ENCODE measurements at regions of chr6 and their contacts with region 1.

Region 1: GRCh38 chr6:26537846-26538571 is at the start of gene HMGN4:
- DNase-seq: peak; percentile 82
- H3K4me3 Mint-ChIP-seq: peak within 1 kb of the TSS; percentile 90
- H3K27ac Mint-ChIP-seq: peak within 1 kb of the TSS; percentile 96
- H3K4me1 Mint-ChIP-seq: peaks cover 41% of the 10 kb centered on the region
- H3K27me3 Mint-ChIP-seq: no peaks in the 10 kb centered on the region
- total RNA-seq, gene HMGN4: 92.2 and 99.4 TPM in 2 replicates

Region 2: DNA sequence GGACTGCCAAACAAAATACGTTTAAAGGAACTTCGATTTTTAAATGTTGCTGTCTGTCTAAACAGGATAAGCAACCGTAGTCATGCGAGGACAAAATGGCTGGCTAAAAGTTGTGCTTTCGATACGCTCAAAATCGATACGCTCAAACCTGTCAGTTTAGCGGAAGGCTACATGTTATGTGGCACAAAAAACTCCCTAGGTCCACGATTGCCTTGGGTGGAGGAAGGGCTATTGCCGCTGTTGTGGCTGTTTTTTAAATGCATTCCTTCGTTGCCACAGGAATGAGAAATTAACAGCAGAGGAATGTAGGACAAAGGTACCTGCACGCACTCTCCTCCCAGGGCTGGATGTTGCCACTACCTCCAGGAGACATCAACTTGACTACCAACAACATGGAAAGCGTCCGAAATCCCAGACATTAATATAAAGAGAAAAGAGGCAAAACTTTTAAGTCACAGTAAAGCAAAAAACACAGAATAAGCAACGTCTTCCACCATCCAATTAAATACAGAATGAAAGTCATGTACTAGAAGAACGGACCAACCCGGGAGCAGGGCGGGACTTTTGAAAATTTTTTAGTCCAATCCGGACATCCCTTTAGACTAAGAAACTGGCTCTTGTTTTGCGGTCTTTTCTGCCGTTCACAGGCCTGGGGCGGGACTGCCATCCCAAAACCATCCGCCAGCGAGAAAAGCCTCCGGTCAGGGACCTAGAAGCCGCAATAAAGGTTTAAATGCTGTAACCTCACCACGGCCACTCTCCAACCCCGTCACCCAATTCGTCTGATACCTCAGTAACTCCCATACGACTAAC is 482.9 kb before region 1 on chr6:
- intact Hi-C with region 1: no loop called
- DNase-seq: peak; percentile 85
- H3K4me3 Mint-ChIP-seq: peak overlapping the region; percentile 90
- H3K27ac Mint-ChIP-seq: peak overlapping the region; percentile 99
- H3K4me1 Mint-ChIP-seq: peaks cover 33% of the 10 kb centered on the region
- H3K27me3 Mint-ChIP-seq: no peaks in the 10 kb centered on the region

Region 3: DNA sequence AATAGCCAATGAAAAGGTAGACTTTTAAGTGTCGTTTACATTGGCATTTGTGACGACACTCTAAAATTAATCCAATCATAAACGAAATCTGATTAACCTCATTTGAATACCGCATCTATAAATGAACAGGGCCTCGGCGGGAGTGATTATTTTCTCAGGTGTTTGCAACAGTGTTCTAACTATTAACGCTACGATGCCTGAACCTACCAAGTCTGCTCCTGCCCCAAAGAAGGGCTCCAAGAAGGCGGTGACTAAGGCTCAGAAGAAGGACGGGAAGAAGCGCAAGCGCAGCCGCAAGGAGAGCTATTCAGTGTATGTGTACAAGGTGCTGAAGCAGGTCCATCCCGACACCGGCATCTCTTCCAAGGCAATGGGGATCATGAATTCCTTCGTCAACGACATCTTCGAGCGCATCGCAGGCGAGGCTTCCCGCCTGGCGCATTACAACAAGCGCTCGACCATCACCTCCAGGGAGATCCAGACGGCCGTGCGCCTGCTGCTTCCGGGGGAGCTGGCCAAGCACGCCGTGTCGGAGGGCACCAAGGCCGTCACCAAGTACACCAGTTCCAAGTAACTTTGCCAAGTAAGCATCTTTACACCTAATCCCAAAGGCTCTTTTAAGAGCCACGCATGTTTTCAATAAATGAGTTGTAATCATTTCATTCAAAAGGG is 379.9 kb before region 1 on chr6:
- intact Hi-C with region 1: no loop called
- DNase-seq: peak; percentile 90
- H3K4me3 Mint-ChIP-seq: peak overlapping the region; percentile 90
- H3K27ac Mint-ChIP-seq: peak overlapping the region; percentile 96
- H3K4me1 Mint-ChIP-seq: peaks cover 47% of the 10 kb centered on the region
- H3K27me3 Mint-ChIP-seq: no peaks in the 10 kb centered on the region

Region 4: GRCh38 chr6:26322645-26323482 is 215.1 kb before region 1 on chr6:
- intact Hi-C with region 1: loop called (anchors 2 kb)
- DNase-seq: peak; percentile 60
- H3K4me3 Mint-ChIP-seq: peak overlapping the region; percentile 86
- H3K27ac Mint-ChIP-seq: peak overlapping the region; percentile 91
- H3K4me1 Mint-ChIP-seq: peaks cover 45% of the 10 kb centered on the region
- H3K27me3 Mint-ChIP-seq: peaks cover 3% of the 10 kb centered on the region

Region 5: DNA sequence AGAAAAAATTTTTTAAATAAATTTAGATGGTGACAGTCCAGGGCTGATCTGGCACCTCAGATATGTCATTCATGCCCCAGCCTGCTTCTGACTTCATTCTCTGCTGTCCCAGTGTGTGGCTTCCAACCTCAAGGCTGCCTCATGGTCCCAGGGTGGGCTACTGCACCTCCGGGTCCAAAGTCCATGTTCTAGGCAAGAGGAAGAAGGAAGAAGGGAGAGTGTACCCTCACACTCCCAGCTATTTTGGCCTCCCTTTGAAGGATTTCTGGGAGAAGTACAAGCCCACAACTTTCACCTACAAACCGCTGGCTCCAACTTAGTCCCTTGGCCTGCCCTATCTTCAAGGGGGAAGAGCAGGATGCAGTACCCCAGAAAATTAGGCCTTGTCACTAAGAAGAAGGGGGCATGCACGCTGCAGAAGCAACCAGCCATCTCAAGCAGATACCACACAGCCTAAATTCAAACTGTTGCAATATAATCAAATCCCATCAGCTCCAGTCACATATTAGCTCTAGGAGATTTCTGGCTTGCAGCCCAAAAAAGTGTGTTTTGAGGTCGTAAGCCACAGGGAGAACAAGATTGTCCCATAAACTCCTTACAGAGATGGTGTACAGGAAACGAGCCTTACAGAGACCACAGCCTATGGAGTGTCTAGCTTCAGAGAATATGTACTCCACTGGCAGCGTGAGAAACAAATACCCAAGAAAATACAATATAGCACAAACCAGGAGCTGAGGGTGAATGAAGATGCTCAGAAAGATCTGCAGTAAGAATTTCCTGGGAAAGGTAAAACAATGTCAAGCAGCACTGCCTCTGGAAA is 173.9 kb before region 1 on chr6:
- intact Hi-C with region 1: no loop called
- DNase-seq: no peak
- H3K4me3 Mint-ChIP-seq: no peak overlapping the region
- H3K27ac Mint-ChIP-seq: no peak overlapping the region
- H3K4me1 Mint-ChIP-seq: peaks cover 52% of the 10 kb centered on the region
- H3K27me3 Mint-ChIP-seq: no peaks in the 10 kb centered on the region

Region 6: GRCh38 chr6:26473758-26474438 is 64.1 kb before region 1 on chr6:
- intact Hi-C with region 1: loop called (anchors 2 kb)
- DNase-seq: peak; percentile 79
- H3K4me3 Mint-ChIP-seq: peak overlapping the region; percentile 100
- H3K27ac Mint-ChIP-seq: peak overlapping the region; percentile 100
- H3K4me1 Mint-ChIP-seq: peaks cover 29% of the 10 kb centered on the region
- H3K27me3 Mint-ChIP-seq: no peaks in the 10 kb centered on the region

Region 7: DNA sequence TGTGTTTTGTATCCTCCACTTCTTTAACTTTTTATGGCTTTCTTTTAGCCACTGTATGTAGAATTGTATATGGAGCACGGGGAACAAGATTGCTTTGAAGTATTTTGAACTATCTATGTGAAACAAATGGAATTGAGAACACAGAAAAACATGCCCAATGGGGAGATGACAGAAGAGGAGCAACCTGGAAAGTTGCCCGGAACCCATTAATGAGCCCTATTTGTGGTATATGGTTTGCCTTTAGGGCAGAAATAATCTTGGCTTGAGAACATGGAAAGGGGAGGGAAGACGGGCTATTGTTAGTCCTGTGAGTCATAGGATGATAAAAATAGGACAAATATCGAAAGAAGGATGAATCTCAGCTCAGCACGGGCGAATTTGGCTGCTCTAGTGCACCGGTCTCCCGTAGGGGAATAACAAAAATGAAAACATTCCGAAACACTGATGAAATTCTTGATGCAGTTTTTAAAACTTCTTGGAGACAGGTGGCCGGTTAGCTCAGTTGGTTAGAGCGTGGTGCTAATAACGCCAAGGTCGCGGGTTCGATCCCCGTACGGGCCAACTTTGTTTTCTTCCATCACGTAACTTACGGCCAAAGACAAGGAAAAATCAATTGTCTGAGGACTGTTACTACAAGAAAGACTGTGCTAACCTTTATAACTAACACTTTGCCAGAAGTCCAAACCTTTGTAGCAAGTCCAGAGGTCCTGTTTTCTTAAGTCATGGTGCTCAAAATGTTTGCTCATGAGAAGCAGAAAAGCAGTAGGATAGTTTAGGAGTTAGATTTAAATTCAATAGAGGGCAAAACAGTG is 15.8 kb after region 1 on chr6:
- intact Hi-C with region 1: loop called (anchors 1 kb)
- DNase-seq: peak; percentile 78
- H3K4me3 Mint-ChIP-seq: no peak overlapping the region
- H3K27ac Mint-ChIP-seq: no peak overlapping the region
- H3K4me1 Mint-ChIP-seq: peaks cover 24% of the 10 kb centered on the region
- H3K27me3 Mint-ChIP-seq: no peaks in the 10 kb centered on the region

Region 8: GRCh38 chr6:26596579-26597388 is 58.8 kb after region 1 on chr6 and contains the start of gene ABT1:
- intact Hi-C with region 1: loop called (anchors 1 kb)
- DNase-seq: peak; percentile 96
- H3K4me3 Mint-ChIP-seq: no peak within 1 kb of the TSS
- H3K27ac Mint-ChIP-seq: no peak within 1 kb of the TSS
- H3K4me1 Mint-ChIP-seq: peaks cover 28% of the 10 kb centered on the region
- H3K27me3 Mint-ChIP-seq: peaks cover 27% of the 10 kb centered on the region
- total RNA-seq, gene ABT1: 28.2 and 29.9 TPM in 2 replicates